Activated CD8-positive, alpha-beta T cell treated with anti-CD3 and anti-CD28 coated beads, Interleukin-2, amount 10 ng/mL, durations not matched to agents 7 days and 5 days (primary cell): ENCODE measurements at regions of chr12 and their contacts with region 1.

Region 1: GRCh38 chr12:49740930-49741881 is at the start of gene TMBIM6:
- DNase-seq: peak; percentile 100
- ATAC-seq: peak; percentile 94
- H3K4me3 Mint-ChIP-seq: peak within 1 kb of the TSS; percentile 85
- H3K27ac Mint-ChIP-seq: peak within 1 kb of the TSS; percentile 97
- H3K4me1 Mint-ChIP-seq: peaks cover 28% of the 10 kb centered on the region
- H3K27me3 Mint-ChIP-seq: no peaks in the 10 kb centered on the region
- total RNA-seq, gene TMBIM6: 420 TPM

Region 2: GRCh38 chr12:49636979-49637755 is 104.0 kb before region 1 on chr12:
- CTCF ChIA-PET with region 1: interaction called, 31 read pairs
- POLR2A ChIA-PET with region 1: interaction called, 8 read pairs
- DNase-seq: peak; percentile 79
- ATAC-seq: peak; percentile 89
- H3K4me3 Mint-ChIP-seq: no peak overlapping the region
- H3K27ac Mint-ChIP-seq: peak overlapping the region; percentile 28
- H3K4me1 Mint-ChIP-seq: peaks cover 31% of the 10 kb centered on the region
- H3K27me3 Mint-ChIP-seq: no peaks in the 10 kb centered on the region

Region 3: GRCh38 chr12:49662998-49663843 is 78.0 kb before region 1 on chr12:
- CTCF ChIA-PET with region 1: interaction called, 11 read pairs
- POLR2A ChIA-PET with region 1: interaction called, 6 read pairs
- DNase-seq: peak; percentile 90
- ATAC-seq: peak; percentile 98
- H3K4me3 Mint-ChIP-seq: peak overlapping the region; percentile 74
- H3K27ac Mint-ChIP-seq: peak overlapping the region; percentile 97
- H3K4me1 Mint-ChIP-seq: peaks cover 73% of the 10 kb centered on the region
- H3K27me3 Mint-ChIP-seq: no peaks in the 10 kb centered on the region

Region 4: GRCh38 chr12:49707128-49707811 is 33.9 kb before region 1 on chr12 and contains the start of gene FMNL3:
- CTCF ChIA-PET with region 1: interaction called, 36 read pairs
- POLR2A ChIA-PET with region 1: interaction called, 27 read pairs
- DNase-seq: peak; percentile 98
- ATAC-seq: peak; percentile 96
- H3K4me3 Mint-ChIP-seq: peak within 1 kb of the TSS; percentile 90
- H3K27ac Mint-ChIP-seq: peak within 1 kb of the TSS; percentile 83
- H3K4me1 Mint-ChIP-seq: peaks cover 42% of the 10 kb centered on the region
- H3K27me3 Mint-ChIP-seq: peaks cover 26% of the 10 kb centered on the region
- total RNA-seq, gene FMNL3: 53.5 to 54.5 TPM

Region 5: DNA sequence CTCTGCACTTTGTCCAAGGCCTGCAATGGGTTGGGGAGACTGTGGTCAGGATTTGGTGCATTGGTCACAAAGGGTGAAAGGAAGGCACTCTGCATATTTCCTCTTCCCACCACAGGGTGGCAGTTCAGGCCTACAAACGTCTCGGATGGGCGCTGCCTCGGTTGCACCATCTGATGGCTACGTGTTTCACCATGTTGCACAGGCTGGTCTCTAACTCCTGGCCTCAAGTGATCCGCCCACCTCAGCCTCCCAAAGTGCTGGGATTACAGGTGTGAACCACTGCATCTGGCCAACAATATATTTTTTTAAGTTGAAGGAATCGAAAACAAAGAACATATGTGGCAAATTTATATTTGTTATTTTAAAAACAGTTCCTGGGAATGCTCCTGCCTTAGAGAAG is 35.2 kb after region 1 on chr12:
- CTCF ChIA-PET with region 1: interaction called, 45 read pairs
- POLR2A ChIA-PET with region 1: interaction called, 15 read pairs
- DNase-seq: peak; percentile 78
- ATAC-seq: peak; percentile 85
- H3K4me3 Mint-ChIP-seq: no peak overlapping the region
- H3K27ac Mint-ChIP-seq: peak overlapping the region; percentile 48
- H3K4me1 Mint-ChIP-seq: peaks cover 20% of the 10 kb centered on the region
- H3K27me3 Mint-ChIP-seq: peaks cover 20% of the 10 kb centered on the region

Region 6: GRCh38 chr12:49842519-49843352 is 101.5 kb after region 1 on chr12 and contains the start of gene BCDIN3D:
- CTCF ChIA-PET with region 1: interaction called, 29 read pairs
- POLR2A ChIA-PET with region 1: interaction called, 20 read pairs
- DNase-seq: peak; percentile 93
- ATAC-seq: peak; percentile 96
- H3K4me3 Mint-ChIP-seq: peak within 1 kb of the TSS; percentile 92
- H3K27ac Mint-ChIP-seq: peak within 1 kb of the TSS; percentile 86
- H3K4me1 Mint-ChIP-seq: peaks cover 51% of the 10 kb centered on the region
- H3K27me3 Mint-ChIP-seq: no peaks in the 10 kb centered on the region
- total RNA-seq, gene BCDIN3D: 7.3 to 7.4 TPM